ENCODE measurements at regions of chr3 and their contacts with region 1.

Region 1: GRCh38 chr3:178436773-178437172 is 99.5 kb upstream of the KCNMB2 start:
- DNase-seq: no peak
- ATAC-seq: peak; percentile 29 to 71

Region 2: GRCh38 chr3:178966299-178967176 is 529.8 kb after region 1 on chr3:
- intact Hi-C with region 1: loop called (anchors 5 to 10 kb)
- DNase-seq: no peak
- ATAC-seq: peak; percentile 37 to 44